Left ventricle myocardium superior (tissue), 1 donor: ENCODE measurements at regions of chr4 and their contacts with region 1.

Region 1: DNA sequence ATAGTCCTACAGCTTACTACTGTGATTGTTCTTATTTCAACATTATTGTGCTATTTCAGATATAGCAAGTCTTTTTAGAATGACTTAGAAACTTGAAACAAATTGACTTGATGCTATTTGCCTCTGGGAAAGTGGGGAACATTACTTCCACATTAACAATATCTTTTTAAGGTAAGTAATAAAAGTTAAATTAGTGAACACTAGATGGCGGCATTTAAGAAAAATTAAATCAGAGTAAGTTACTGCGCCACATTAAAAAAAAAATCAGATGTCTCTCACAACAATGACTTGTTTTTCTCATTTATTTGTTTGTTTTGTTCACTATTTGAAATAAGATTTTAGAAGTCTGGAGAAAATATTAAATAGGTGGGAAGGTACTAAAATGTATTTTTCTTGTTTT is 1026.9 kb upstream of the SLIT2 start:
- DNase-seq: no peak
- ATAC-seq: no peak

Region 2: GRCh38 chr4:19278665-19279064 is 53.8 kb after region 1 on chr4:
- intact Hi-C with region 1: no loop called
- DNase-seq: no peak
- ATAC-seq: no peak

Region 3: DNA sequence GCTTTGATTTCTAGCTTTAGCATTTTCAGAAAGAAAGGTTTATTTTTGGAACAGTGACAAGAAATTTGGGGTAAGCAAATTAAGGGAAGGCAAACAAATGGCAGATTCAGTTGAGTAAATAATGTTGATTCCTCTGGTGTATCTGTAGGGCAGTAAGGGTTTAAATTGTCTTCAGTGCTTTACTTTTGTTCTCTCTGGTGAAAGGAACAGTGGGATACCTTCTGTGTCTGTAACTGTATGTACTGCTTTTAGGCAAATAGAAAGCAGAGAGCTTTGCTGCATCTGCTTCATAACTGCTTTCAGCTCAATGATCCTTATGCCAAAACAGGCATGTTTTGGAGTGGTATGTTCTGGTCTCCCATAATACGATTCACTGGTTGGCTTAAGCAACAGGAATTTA is 94.8 kb after region 1 on chr4:
- intact Hi-C with region 1: no loop called
- DNase-seq: no peak
- ATAC-seq: no peak

Region 4: GRCh38 chr4:19368800-19369199 is 144.0 kb after region 1 on chr4:
- intact Hi-C with region 1: no loop called
- DNase-seq: no peak
- ATAC-seq: no peak

Region 5: DNA sequence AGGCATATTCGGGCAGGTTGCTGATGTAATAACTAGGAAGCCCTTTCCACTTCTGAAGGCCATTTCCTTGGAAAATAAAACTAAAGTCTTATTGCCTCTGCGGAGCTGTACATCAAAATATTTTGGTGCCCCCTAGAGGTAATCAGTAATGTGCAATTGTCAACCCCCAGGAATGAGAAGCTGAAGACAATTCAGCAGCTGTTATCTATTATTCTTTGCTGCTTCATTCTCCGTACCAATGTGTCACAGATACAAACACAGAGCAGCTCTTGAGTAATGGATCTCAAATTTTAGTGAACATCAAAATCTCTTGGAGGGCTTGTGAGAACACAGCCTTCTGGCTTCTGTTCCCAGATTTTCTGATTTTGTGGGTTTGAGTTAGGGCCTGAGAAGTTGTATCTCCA is 1023.3 kb after region 1 on chr4:
- intact Hi-C with region 1: loop called (anchors 5 kb)
- DNase-seq: no peak
- ATAC-seq: peak; percentile 18